Natural killer cell (primary cell): ENCODE measurements at regions of chr18 and their contacts with region 1.

Region 1: DNA sequence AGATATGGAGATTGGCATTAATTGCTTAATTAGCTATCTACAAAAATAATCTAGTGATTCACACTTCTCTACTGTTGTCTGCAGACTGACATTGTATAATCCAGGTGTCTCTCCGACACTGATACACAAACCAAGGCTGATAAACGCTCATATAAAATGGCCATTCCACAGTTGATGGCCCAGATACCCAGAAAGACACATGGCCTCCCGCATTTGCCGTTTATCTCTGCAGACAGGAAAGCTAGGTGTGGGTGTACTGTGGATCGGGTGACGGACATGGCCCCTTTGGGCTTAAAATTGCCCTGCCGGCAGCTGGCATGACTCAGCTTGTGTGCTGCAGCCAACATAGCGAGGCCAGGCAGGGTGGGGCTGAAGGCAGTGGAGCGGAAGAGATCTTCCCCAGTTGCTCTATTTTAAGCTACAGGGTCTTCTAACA is 18.5 kb downstream of the PMAIP1 start:
- DNase-seq: peak in 1 of 2 donors; percentile 23
- ATAC-seq: peak; percentile 54 to 69 (median 63)
- H3K4me3 ChIP-seq: no peak overlapping the region
- H3K4me3 Mint-ChIP-seq: peak overlapping the region; percentile 38
- H3K27ac ChIP-seq: no peak overlapping the region
- H3K27ac Mint-ChIP-seq: peak overlapping the region in 1 of 2 donors; percentile 65
- H3K4me1 ChIP-seq: peaks cover 17% of the 10 kb centered on the region
- H3K4me1 Mint-ChIP-seq: peaks cover 18 to 49% of the 10 kb centered on the region in 2 donors
- H3K27me3 ChIP-seq: no peaks in the 10 kb centered on the region
- H3K27me3 Mint-ChIP-seq: peaks cover 2 to 6% of the 10 kb centered on the region in 2 donors
- CTCF ChIP-seq: no peak

Region 2: GRCh38 chr18:59837586-59837985 is 80.8 kb before region 1 on chr18:
- intact Hi-C with region 1: loop called (anchors 5 kb)
- DNase-seq: peak in 1 of 2 donors; percentile 73
- ATAC-seq: peak; percentile 72 to 80 (median 75)
- H3K4me3 ChIP-seq: no peak overlapping the region
- H3K4me3 Mint-ChIP-seq: no peak overlapping the region
- H3K27ac ChIP-seq: no peak overlapping the region
- H3K27ac Mint-ChIP-seq: no peak overlapping the region
- H3K4me1 ChIP-seq: no peaks in the 10 kb centered on the region
- H3K4me1 Mint-ChIP-seq: peaks cover 0 to 5% of the 10 kb centered on the region in 2 donors
- H3K27me3 ChIP-seq: no peaks in the 10 kb centered on the region
- H3K27me3 Mint-ChIP-seq: peaks cover 0 to 4% of the 10 kb centered on the region in 2 donors
- CTCF ChIP-seq: peak; percentile 92

Region 3: GRCh38 chr18:59861963-59862819 is 56.1 kb before region 1 on chr18:
- intact Hi-C with region 1: no loop called
- DNase-seq: no peak
- ATAC-seq: no peak
- H3K4me3 ChIP-seq: no peak overlapping the region
- H3K4me3 Mint-ChIP-seq: no peak overlapping the region
- H3K27ac ChIP-seq: no peak overlapping the region
- H3K27ac Mint-ChIP-seq: no peak overlapping the region
- H3K4me1 ChIP-seq: no peaks in the 10 kb centered on the region
- H3K4me1 Mint-ChIP-seq: peaks cover 0 to 8% of the 10 kb centered on the region in 2 donors
- H3K27me3 ChIP-seq: no peaks in the 10 kb centered on the region
- H3K27me3 Mint-ChIP-seq: peaks cover 0 to 2% of the 10 kb centered on the region in 2 donors
- CTCF ChIP-seq: no peak

Region 4: GRCh38 chr18:59885579-59886163 is 32.7 kb before region 1 on chr18:
- intact Hi-C with region 1: loop called (anchors 5 kb)
- DNase-seq: peak in 1 of 2 donors; percentile 56
- ATAC-seq: peak; percentile 74 to 83 (median 80)
- H3K4me3 ChIP-seq: no peak overlapping the region
- H3K4me3 Mint-ChIP-seq: peak overlapping the region; percentile 86
- H3K27ac ChIP-seq: peak overlapping the region; percentile 71
- H3K27ac Mint-ChIP-seq: peak overlapping the region; percentile 85 to 89
- H3K4me1 ChIP-seq: peaks cover 38% of the 10 kb centered on the region
- H3K4me1 Mint-ChIP-seq: peaks cover 42 to 43% of the 10 kb centered on the region in 2 donors
- H3K27me3 ChIP-seq: no peaks in the 10 kb centered on the region
- H3K27me3 Mint-ChIP-seq: no peaks in the 10 kb centered on the region
- CTCF ChIP-seq: no peak

Region 5: DNA sequence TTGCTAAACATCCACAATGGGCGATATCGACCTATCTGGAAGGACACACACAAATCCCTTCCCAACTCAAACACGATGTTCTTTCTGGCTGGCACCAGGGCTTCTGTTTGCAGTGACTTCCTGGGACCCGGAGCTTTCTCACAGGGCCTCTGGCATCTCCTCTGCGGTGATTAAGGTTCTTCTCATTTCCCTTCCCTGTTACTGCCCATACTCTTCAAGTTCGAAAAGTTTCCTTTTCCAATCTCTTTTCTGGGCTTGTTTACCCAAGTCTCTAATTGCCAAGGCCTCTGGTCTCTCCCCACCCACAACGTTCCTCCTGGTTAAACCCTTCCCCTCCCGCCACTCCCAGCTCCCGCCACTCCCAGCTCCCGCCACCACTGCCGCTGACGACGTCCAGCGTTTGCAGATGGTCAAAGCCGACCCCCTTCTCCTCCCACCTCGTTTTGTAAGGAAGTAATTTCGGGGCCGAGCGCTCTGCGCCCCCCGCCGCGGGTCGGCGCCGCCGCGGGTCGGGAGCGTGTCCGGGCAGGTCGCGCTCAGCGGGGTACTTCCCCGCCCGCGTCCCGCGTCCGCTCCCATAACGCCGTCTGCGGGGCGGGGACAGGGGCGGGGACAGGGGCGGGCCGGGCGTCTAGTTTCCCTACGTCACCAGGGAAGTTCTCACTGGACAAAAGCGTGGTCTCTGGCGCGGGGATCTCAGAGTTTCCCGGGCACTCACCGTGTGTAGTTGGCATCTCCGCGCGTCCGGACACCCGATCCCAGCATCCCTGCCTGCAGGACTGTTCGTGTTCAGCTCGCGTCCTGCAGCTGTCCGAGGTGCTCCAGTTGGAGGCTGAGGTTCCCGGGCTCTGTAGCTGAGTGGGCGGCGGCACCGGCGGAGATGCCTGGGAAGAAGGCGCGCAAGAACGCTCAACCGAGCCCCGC is 18.8 kb before region 1 on chr18 and contains the start of gene PMAIP1:
- intact Hi-C with region 1: loop called (anchors 1 kb)
- DNase-seq: peak; percentile 91
- ATAC-seq: peak; percentile 71 to 91 (median 84)
- H3K4me3 ChIP-seq: peak within 1 kb of the TSS; percentile 97
- H3K4me3 Mint-ChIP-seq: peak within 1 kb of the TSS; percentile 97
- H3K27ac ChIP-seq: peak within 1 kb of the TSS; percentile 95
- H3K27ac Mint-ChIP-seq: peak within 1 kb of the TSS; percentile 90 to 98
- H3K4me1 ChIP-seq: peaks cover 14% of the 10 kb centered on the region
- H3K4me1 Mint-ChIP-seq: peaks cover 46 to 49% of the 10 kb centered on the region in 2 donors
- H3K27me3 ChIP-seq: no peaks in the 10 kb centered on the region
- H3K27me3 Mint-ChIP-seq: no peaks in the 10 kb centered on the region
- CTCF ChIP-seq: no peak
- total RNA-seq, gene PMAIP1: 211 to 514 (median 264) TPM

Region 6: GRCh38 chr18:59905686-59906091 is 12.6 kb before region 1 on chr18:
- intact Hi-C with region 1: loop called (anchors 1 kb)
- DNase-seq: no peak
- ATAC-seq: no peak
- H3K4me3 ChIP-seq: no peak overlapping the region
- H3K4me3 Mint-ChIP-seq: peak overlapping the region; percentile 75
- H3K27ac ChIP-seq: peak overlapping the region; percentile 82
- H3K27ac Mint-ChIP-seq: peak overlapping the region; percentile 90 to 97
- H3K4me1 ChIP-seq: peaks cover 18% of the 10 kb centered on the region
- H3K4me1 Mint-ChIP-seq: peaks cover 58 to 74% of the 10 kb centered on the region in 2 donors
- H3K27me3 ChIP-seq: no peaks in the 10 kb centered on the region
- H3K27me3 Mint-ChIP-seq: no peaks in the 10 kb centered on the region
- CTCF ChIP-seq: no peak